ENCODE measurements at regions of chr4 and their contacts with region 1.

Region 1: DNA sequence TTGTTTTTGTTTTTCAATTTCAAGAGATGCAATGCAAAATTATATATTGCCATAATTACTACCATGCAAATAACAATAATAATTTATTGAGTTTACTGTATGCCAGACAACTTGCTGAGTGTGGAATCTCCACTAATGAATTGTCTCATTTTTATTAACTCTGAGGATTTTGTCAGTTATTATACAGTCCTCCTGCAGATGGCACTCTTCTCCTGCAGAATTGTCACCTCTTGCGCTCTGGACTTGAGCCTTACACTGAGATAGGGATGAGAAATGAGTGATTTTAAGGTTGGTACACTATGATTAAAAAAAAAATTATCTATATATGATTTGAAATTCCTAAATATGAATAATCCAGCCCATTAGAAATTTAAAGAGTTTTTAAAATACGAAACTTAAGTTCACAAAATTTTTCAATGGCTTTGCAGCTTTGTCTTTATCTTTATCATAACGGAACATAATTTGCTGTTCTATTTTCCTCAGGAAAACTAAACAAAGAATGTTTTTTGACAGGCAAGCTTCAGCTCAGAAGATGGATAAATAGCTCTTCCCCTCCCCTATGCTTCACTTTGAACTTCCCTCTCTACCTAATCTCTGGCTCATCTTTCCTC is 12.7 kb upstream of the PAQR3 start:
- DNase-seq: peak; percentile 57
- ATAC-seq: peak; percentile 70
- H3K4me3 ChIP-seq: no peak overlapping the region
- H3K4me3 Mint-ChIP-seq: no peak overlapping the region
- H3K27ac ChIP-seq: no peak overlapping the region
- H3K27ac Mint-ChIP-seq: no peak overlapping the region
- H3K4me1 ChIP-seq: no peaks in the 10 kb centered on the region
- H3K4me1 Mint-ChIP-seq: no peaks in the 10 kb centered on the region
- H3K27me3 ChIP-seq: peaks cover 0 to 5% (median 0%) of the 10 kb centered on the region in 4 experiments
- H3K27me3 Mint-ChIP-seq: peaks cover 26% of the 10 kb centered on the region
- CTCF ChIP-seq: peak; percentile 90

Region 2: GRCh38 chr4:78938868-78939666 is 12.9 kb before region 1 on chr4 and contains the start of gene PAQR3:
- CTCF ChIA-PET with region 1: interaction called, 32 read pairs
- POLR2A ChIA-PET with region 1: no interaction called
- intact Hi-C with region 1: no loop called
- DNase-seq: peak; percentile 91
- ATAC-seq: peak; percentile 98
- H3K4me3 ChIP-seq: peak within 1 kb of the TSS; percentile 74 to 88 (median 85)
- H3K4me3 Mint-ChIP-seq: peak within 1 kb of the TSS; percentile 91
- H3K27ac ChIP-seq: peak within 1 kb of the TSS; percentile 45 to 75
- H3K27ac Mint-ChIP-seq: peak within 1 kb of the TSS; percentile 79
- H3K4me1 ChIP-seq: peaks cover 12 to 20% of the 10 kb centered on the region in 2 donors
- H3K4me1 Mint-ChIP-seq: peaks cover 26% of the 10 kb centered on the region
- H3K27me3 ChIP-seq: no peaks in the 10 kb centered on the region
- H3K27me3 Mint-ChIP-seq: peaks cover 3% of the 10 kb centered on the region
- CTCF ChIP-seq: no peak
- total RNA-seq, gene PAQR3: 12.6 and 13.5 TPM in 2 replicates

Region 3: GRCh38 chr4:78962597-78963115 is 10.7 kb after region 1 on chr4:
- CTCF ChIA-PET with region 1: interaction called, 21 read pairs
- POLR2A ChIA-PET with region 1: no interaction called
- intact Hi-C with region 1: no loop called
- DNase-seq: no peak
- ATAC-seq: no peak
- H3K4me3 ChIP-seq: no peak overlapping the region
- H3K4me3 Mint-ChIP-seq: no peak overlapping the region
- H3K27ac ChIP-seq: no peak overlapping the region
- H3K27ac Mint-ChIP-seq: no peak overlapping the region
- H3K4me1 ChIP-seq: no peaks in the 10 kb centered on the region
- H3K4me1 Mint-ChIP-seq: no peaks in the 10 kb centered on the region
- H3K27me3 ChIP-seq: no peaks in the 10 kb centered on the region
- H3K27me3 Mint-ChIP-seq: peaks cover 13% of the 10 kb centered on the region
- CTCF ChIP-seq: no peak

Region 4: DNA sequence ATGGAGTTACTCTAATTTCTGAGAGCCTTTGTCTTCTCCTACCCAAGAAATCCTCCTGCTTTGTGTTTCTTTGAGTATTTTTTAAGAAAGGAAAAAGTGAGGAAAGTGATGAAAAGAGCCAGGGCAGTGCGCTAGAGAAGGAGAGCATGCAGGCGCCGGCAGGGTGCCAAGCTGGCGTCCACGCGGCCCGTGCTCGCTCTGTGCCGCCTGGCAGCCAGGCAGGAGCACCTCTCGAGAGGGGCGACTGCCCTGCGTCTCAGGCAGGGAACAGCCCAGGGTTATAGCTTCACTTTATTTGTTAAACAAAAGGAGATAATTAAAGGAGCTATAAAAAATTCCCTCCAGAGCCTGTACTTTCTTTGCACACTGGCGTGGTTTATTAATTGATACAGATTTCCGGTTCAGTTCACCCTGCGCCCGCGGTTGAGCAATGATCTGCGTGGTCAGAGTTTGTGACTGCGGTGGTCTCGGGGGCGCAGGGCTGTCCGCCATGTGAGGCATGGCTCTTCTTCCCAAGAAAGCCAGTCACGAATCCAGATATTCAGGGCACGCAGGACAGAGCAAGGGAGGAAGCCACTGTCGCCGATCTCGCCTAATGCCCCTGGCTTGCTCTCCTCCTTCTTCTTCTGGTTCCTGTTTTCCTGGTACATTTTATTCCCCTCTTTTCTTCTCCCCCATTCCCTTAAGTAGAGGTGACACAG is 98.0 kb after region 1 on chr4:
- CTCF ChIA-PET with region 1: no interaction called
- POLR2A ChIA-PET with region 1: no interaction called
- intact Hi-C with region 1: no loop called
- DNase-seq: no peak
- ATAC-seq: no peak
- H3K4me3 ChIP-seq: no peak overlapping the region
- H3K4me3 Mint-ChIP-seq: no peak overlapping the region
- H3K27ac ChIP-seq: no peak overlapping the region
- H3K27ac Mint-ChIP-seq: no peak overlapping the region
- H3K4me1 ChIP-seq: no peaks in the 10 kb centered on the region
- H3K4me1 Mint-ChIP-seq: no peaks in the 10 kb centered on the region
- H3K27me3 ChIP-seq: no peaks in the 10 kb centered on the region
- H3K27me3 Mint-ChIP-seq: peaks cover 11% of the 10 kb centered on the region
- CTCF ChIP-seq: no peak

Region 5: DNA sequence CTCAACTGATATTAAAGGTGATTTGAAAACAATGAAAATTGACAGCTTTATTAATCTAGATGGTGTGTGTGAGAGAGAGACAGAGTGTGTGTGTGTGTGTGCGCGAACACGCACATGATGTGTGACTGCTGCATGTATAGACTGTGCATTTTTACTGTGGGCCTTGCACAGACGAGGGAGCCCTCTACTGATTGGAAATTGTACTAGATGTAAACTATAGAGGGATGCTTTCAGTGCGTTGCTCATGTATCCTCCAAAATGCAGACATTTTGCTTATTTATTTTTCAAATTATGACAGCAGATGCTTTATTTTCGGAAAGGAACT is 624.4 kb after region 1 on chr4:
- CTCF ChIA-PET with region 1: interaction called, 3 read pairs
- POLR2A ChIA-PET with region 1: no interaction called
- intact Hi-C with region 1: loop called (anchors 10 kb)
- DNase-seq: peak; percentile 28
- ATAC-seq: peak; percentile 41
- H3K4me3 ChIP-seq: no peak overlapping the region
- H3K4me3 Mint-ChIP-seq: no peak overlapping the region
- H3K27ac ChIP-seq: no peak overlapping the region
- H3K27ac Mint-ChIP-seq: no peak overlapping the region
- H3K4me1 ChIP-seq: no peaks in the 10 kb centered on the region
- H3K4me1 Mint-ChIP-seq: peaks cover 2% of the 10 kb centered on the region
- H3K27me3 ChIP-seq: no peaks in the 10 kb centered on the region
- H3K27me3 Mint-ChIP-seq: no peaks in the 10 kb centered on the region
- CTCF ChIP-seq: peak; percentile 26

Region 6: GRCh38 chr4:79682801-79683530 is 731.0 kb after region 1 on chr4:
- CTCF ChIA-PET with region 1: no interaction called
- POLR2A ChIA-PET with region 1: no interaction called
- intact Hi-C with region 1: loop called (anchors 5 kb)
- DNase-seq: no peak
- ATAC-seq: no peak
- H3K4me3 ChIP-seq: no peak overlapping the region
- H3K4me3 Mint-ChIP-seq: no peak overlapping the region
- H3K27ac ChIP-seq: no peak overlapping the region
- H3K27ac Mint-ChIP-seq: no peak overlapping the region
- H3K4me1 ChIP-seq: no peaks in the 10 kb centered on the region
- H3K4me1 Mint-ChIP-seq: peaks cover 6% of the 10 kb centered on the region
- H3K27me3 ChIP-seq: no peaks in the 10 kb centered on the region
- H3K27me3 Mint-ChIP-seq: peaks cover 7% of the 10 kb centered on the region
- CTCF ChIP-seq: no peak

Region 7: DNA sequence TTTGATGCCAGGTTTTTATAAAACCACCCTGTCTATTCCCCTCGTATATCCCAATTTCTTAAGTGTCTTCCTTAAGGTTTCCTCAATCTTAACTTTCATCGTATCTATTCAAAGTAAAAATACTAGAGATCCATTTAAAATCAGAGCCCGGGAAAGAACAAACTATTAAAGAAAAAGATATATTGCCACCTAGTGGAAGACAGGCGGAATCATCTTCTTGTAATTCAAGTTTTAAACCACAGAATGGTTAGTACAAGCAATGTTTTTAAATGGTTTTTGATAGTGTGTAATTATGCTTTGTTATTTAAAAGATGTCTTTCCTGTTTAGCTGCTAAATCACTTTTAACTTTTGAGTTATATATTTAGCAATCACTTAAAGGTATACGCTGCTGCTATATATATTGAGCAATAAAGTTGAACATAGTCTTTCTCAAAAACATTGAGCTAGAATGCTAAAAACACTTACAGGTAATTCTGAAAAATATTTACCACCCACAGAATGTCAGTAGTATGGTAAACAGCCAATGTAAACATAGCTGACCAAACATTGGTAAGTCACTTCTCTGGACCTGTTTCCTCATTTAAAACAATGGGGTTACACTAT is 1263.6 kb after region 1 on chr4:
- CTCF ChIA-PET with region 1: interaction called, 18 read pairs
- POLR2A ChIA-PET with region 1: no interaction called
- intact Hi-C with region 1: loop called (anchors 1 kb)
- DNase-seq: peak; percentile 54
- ATAC-seq: peak; percentile 33
- H3K4me3 ChIP-seq: no peak overlapping the region
- H3K4me3 Mint-ChIP-seq: no peak overlapping the region
- H3K27ac ChIP-seq: no peak overlapping the region
- H3K27ac Mint-ChIP-seq: no peak overlapping the region
- H3K4me1 ChIP-seq: no peaks in the 10 kb centered on the region
- H3K4me1 Mint-ChIP-seq: peaks cover 1% of the 10 kb centered on the region
- H3K27me3 ChIP-seq: peaks cover 0 to 9% (median 3%) of the 10 kb centered on the region in 4 experiments
- H3K27me3 Mint-ChIP-seq: peaks cover 20% of the 10 kb centered on the region
- CTCF ChIP-seq: peak; percentile 84

Measured in B cell (primary cell).